ENCODE measurements at regions of chr10 and their contacts with region 1.

Region 1: GRCh38 chr10:69179743-69180524 is at the start of gene SUPV3L1:
- DNase-seq: peak; percentile 91
- H3K4me3 Mint-ChIP-seq: peak within 1 kb of the TSS; percentile 99
- H3K27ac Mint-ChIP-seq: peak within 1 kb of the TSS; percentile 100
- H3K4me1 Mint-ChIP-seq: peaks cover 32% of the 10 kb centered on the region
- H3K27me3 Mint-ChIP-seq: no peaks in the 10 kb centered on the region
- CTCF ChIP-seq: no peak
- total RNA-seq, gene SUPV3L1: 39.1 and 47.8 TPM in 2 replicates

Region 2: GRCh38 chr10:69220041-69220451 is 40.1 kb after region 1 on chr10 and contains the start of gene HKDC1:
- CTCF ChIA-PET with region 1: interaction called, 4 read pairs
- intact Hi-C with region 1: loop called (anchors 1 kb)
- DNase-seq: peak; percentile 84
- H3K4me3 Mint-ChIP-seq: peak within 1 kb of the TSS; percentile 88
- H3K27ac Mint-ChIP-seq: peak within 1 kb of the TSS; percentile 92
- H3K4me1 Mint-ChIP-seq: peaks cover 35% of the 10 kb centered on the region
- H3K27me3 Mint-ChIP-seq: no peaks in the 10 kb centered on the region
- CTCF ChIP-seq: no peak
- total RNA-seq, gene HKDC1: 112 and 113 TPM in 2 replicates

Region 3: GRCh38 chr10:69242852-69243212 is 62.9 kb after region 1 on chr10:
- CTCF ChIA-PET with region 1: interaction called, 11 read pairs
- intact Hi-C with region 1: no loop called
- DNase-seq: no peak
- H3K4me3 Mint-ChIP-seq: no peak overlapping the region
- H3K27ac Mint-ChIP-seq: no peak overlapping the region
- H3K4me1 Mint-ChIP-seq: peaks cover 6% of the 10 kb centered on the region
- H3K27me3 Mint-ChIP-seq: no peaks in the 10 kb centered on the region
- CTCF ChIP-seq: no peak

Measured in Calu3 (cell line).